H1 (cell line): ENCODE measurements at regions of chr5 and their contacts with region 1.

Region 1: DNA sequence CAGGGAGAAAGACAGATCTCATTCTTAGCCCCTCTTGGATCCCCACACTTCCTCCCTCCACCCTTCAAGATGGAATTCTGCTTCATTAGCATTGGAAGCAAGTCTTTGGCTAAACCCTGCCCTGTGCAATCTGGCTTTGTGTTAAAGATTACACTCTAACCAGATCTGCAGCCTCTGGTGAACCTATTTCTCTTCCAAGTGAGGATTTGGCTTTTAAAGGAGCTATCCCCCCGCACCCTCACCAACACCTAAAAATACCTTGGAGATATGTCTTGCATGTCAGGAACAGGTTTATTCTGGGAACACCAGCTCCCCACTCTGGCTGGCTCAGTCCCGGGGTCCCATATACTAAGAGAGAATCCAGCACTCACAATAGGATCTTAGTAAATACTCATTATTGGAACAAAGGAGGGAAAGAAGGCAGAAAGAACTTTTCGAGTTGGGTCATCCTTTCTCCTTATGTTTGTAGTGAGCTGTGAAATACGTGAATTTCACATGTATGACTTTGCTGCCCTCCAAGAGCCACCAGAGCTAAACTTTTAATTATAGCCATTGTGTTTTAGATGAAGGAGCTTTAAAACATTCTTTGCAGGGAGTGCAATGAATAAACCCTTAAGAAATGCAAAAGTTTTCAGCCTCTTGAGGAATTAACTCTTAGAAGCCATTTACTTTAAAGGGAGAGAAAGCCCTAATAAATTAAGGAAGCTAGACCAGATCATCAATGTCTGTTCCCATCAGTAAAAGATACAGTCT is 53.7 kb upstream of the HRH2 start:
- DNase-seq: no peak
- H3K4me3 ChIP-seq: peak overlapping the region in 3 of 4 experiments; percentile 1 to 27 (median 1); a peak in 3 of 8 replicates
- H3K27ac ChIP-seq: peak overlapping the region; percentile 36; the same call in 1 of the 2 replicates
- H3K4me1 ChIP-seq: peaks cover 0 to 6% (median 2%) of the 10 kb centered on the region in 4 experiments; a peak in 3 of 7 replicates
- H3K27me3 ChIP-seq: no peaks in the 10 kb centered on the region
- CTCF ChIP-seq: no peak
- EP300 ChIP-seq: no peak
- POLR2A ChIP-seq: no peak
- RAD21 ChIP-seq: no peak

Region 2: DNA sequence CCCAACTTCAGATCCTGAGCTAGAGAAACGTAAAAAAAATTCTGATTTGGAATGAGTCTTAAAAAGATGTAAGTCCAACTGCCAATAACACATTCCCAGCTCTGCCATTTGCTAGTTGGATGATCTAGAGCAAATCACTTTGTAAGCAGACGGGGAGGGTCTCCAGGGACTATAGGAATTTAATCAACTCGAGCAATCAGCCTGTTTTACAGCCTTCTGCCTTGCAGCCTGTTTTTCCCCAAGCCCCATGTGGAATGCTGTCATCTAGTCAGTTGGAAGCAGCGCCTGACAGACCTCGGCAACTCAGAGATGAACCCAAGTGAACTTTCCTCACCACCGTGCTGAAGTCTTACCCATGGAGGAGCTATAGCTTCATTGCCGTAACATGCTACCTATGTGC is 18.9 kb after region 1 on chr5:
- CTCF ChIA-PET with region 1: interaction called, 10 read pairs
- POLR2A ChIA-PET with region 1: interaction called, 3 read pairs
- DNase-seq: no peak
- H3K4me3 ChIP-seq: no peak overlapping the region
- H3K27ac ChIP-seq: no peak overlapping the region
- H3K4me1 ChIP-seq: peaks cover 0 to 7% (median 3%) of the 10 kb centered on the region in 4 experiments; a peak in 4 of 7 replicates
- H3K27me3 ChIP-seq: no peaks in the 10 kb centered on the region
- CTCF ChIP-seq: no peak
- EP300 ChIP-seq: no peak
- POLR2A ChIP-seq: no peak
- RAD21 ChIP-seq: no peak